Common myeloid progenitor, CD34-positive (primary cell): ENCODE measurements at regions of chr16 and their contacts with region 1.

Region 1: DNA sequence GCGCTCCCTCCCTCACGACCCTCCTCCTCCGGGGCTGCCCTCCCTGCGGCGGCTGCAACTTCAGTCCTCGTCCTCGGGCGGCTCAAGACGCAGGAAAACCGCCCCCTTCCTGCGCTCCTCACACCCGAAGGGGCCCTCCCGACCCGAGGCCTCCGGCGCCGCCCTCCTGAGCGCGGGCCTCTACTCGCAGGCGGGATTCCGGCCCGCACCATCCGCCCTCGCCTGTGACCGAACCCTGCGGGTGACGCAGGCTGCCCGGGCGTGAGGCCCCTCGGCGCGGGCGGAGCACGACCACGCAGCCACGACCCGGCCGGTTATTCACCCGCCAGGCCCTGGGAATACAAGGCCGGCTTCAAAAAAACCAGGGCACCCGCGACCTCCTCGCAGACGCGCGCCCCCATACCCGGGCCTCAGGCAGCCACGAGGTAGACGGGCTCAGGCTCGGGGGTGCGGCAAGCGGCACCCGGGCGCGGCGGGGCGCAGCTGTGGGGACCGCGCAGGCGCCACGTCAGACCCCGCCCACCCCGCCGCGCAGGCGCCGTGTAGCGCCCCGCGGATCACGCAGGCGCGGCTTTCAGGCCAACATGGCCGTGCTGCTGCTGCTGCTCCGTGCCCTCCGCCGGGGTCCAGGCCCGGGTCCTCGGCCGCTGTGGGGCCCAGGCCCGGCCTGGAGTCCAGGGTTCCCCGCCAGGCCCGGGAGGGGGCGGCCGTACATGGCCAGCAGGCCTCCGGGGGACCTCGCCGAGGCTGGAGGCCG is at the start of gene SPG7:
- DNase-seq: peak; percentile 85 to 91 (median 91)
- H3K4me3 ChIP-seq: peak within 1 kb of the TSS; percentile 73 to 90 (median 84)
- H3K27ac ChIP-seq: peak within 1 kb of the TSS; percentile 77 to 93
- H3K4me1 ChIP-seq: peaks cover 8 to 54% (median 43%) of the 10 kb centered on the region in 4 experiments
- H3K27me3 ChIP-seq: no peaks in the 10 kb centered on the region

Region 2: GRCh38 chr16:89334988-89335802 is 172.8 kb before region 1 on chr16:
- CTCF ChIA-PET with region 1: interaction called, 12 read pairs
- POLR2A ChIA-PET with region 1: interaction called, 3 read pairs
- DNase-seq: no peak
- H3K4me3 ChIP-seq: no peak overlapping the region
- H3K27ac ChIP-seq: no peak overlapping the region
- H3K4me1 ChIP-seq: peaks cover 0 to 50% (median 34%) of the 10 kb centered on the region in 4 experiments
- H3K27me3 ChIP-seq: no peaks in the 10 kb centered on the region

Region 3: DNA sequence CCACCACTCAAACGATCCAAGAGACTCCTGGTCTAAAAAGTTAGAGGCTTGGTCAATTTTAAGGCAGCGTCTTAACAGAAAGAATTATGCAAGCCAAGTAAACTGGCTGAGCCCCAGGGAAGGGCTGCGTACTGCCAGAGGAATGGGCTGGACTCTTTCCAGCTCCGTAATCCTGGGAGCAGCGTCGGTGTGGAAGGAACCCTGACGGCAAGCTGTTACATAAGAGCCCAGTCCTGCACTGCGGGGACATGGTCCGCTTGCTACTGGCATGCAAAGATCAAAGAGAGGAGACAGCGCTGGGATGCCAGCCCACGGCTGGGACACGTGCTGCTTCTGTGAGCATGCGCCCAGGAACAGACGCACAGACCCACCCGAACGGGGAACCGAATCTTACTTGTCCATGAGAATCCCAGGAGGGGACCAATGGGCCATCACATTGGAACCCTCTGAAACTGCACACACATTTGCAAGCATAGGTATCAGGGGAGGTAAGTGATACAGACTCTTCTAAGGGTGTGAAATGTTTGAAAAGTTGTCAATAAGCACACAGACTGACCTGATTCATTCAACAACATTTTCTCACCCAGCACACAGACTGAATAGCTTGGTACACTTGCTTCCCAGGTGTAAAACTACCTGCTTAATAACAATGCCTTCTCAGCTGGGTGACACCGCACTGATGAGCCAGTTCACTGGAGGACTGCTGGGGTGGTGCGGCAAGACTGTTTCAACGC is 112.7 kb before region 1 on chr16:
- CTCF ChIA-PET with region 1: no interaction called
- POLR2A ChIA-PET with region 1: no interaction called
- DNase-seq: no peak
- H3K4me3 ChIP-seq: no peak overlapping the region
- H3K27ac ChIP-seq: no peak overlapping the region
- H3K4me1 ChIP-seq: peaks cover 0 to 11% (median 9%) of the 10 kb centered on the region in 4 experiments
- H3K27me3 ChIP-seq: no peaks in the 10 kb centered on the region

Region 4: GRCh38 chr16:89453501-89454321 is 54.3 kb before region 1 on chr16:
- CTCF ChIA-PET with region 1: interaction called, 12 read pairs
- POLR2A ChIA-PET with region 1: no interaction called
- DNase-seq: peak in 2 of 3 donors; percentile 59 to 72
- H3K4me3 ChIP-seq: peak overlapping the region in 1 of 7 experiments; percentile 25
- H3K27ac ChIP-seq: no peak overlapping the region
- H3K4me1 ChIP-seq: peaks cover 8 to 38% (median 24%) of the 10 kb centered on the region in 4 experiments
- H3K27me3 ChIP-seq: no peaks in the 10 kb centered on the region

Region 5: GRCh38 chr16:89489040-89489721 is 18.8 kb before region 1 on chr16:
- CTCF ChIA-PET with region 1: interaction called, 7 read pairs
- POLR2A ChIA-PET with region 1: interaction called, 10 read pairs
- DNase-seq: peak; percentile 95 to 99 (median 98)
- H3K4me3 ChIP-seq: peak overlapping the region; percentile 34 to 92 (median 68)
- H3K27ac ChIP-seq: peak overlapping the region; percentile 80 to 92
- H3K4me1 ChIP-seq: peaks cover 29 to 62% (median 54%) of the 10 kb centered on the region in 4 experiments
- H3K27me3 ChIP-seq: no peaks in the 10 kb centered on the region

Region 6: DNA sequence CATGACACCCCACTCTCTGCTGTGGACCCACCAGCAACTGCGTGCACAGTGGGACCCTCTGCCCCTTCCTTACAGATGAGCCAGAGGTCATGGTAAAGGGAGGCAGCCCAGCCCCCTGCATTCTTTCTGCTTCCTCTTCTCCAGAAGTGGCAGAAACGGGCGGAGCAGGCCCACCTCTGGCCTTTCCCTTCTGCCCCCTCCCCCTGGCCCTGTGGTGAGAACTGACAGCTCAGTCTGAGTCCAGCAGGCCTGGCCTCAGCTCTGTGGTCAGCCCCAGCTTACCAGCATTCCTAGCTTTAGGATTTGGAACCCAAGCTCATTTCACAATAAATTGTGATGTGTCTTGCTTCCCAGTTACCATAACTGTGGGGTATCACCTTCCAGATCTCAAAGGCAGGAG is 12.9 kb before region 1 on chr16:
- CTCF ChIA-PET with region 1: interaction called, 16 read pairs
- POLR2A ChIA-PET with region 1: interaction called, 3 read pairs
- DNase-seq: no peak
- H3K4me3 ChIP-seq: no peak overlapping the region
- H3K27ac ChIP-seq: no peak overlapping the region
- H3K4me1 ChIP-seq: peaks cover 0 to 17% (median 13%) of the 10 kb centered on the region in 4 experiments
- H3K27me3 ChIP-seq: no peaks in the 10 kb centered on the region